Activated CD4-positive, alpha-beta T cell treated with anti-CD3 and anti-CD28 coated beads for 36 hours (primary cell): ENCODE measurements at regions of chrX and their contacts with region 1.

Region 1: GRCh38 chrX:48508400-48509244 is at the start of gene PORCN:
- DNase-seq: peak; percentile 87
- ATAC-seq: peak; percentile 92
- H3K4me3 Mint-ChIP-seq: peak within 1 kb of the TSS; percentile 85
- H3K27ac Mint-ChIP-seq: peak within 1 kb of the TSS; percentile 83
- H3K4me1 Mint-ChIP-seq: peaks cover 13% of the 10 kb centered on the region
- H3K27me3 Mint-ChIP-seq: no peaks in the 10 kb centered on the region
- total RNA-seq, gene PORCN: 6.9 to 9.0 TPM

Region 2: DNA sequence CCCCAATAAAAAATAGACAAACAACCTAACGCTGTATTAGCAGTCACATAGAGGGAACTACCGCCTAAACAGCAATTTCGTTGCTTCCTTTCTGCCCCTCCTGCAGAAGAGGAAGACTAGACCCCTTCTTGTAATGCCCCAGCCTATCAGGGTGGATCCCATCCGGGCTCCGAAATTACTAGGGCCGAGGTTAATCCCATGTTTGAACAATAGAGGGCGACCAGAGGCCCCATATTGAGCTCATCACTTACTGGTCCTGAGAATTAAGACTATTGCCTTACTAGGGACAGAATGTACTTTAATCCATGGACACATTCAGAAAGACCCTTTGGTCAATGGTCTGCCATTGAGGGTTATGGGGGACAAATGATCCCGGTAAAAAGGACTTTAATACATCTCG is 425.4 kb before region 1 on chrX:
- CTCF ChIA-PET with region 1: no interaction called
- POLR2A ChIA-PET with region 1: no interaction called
- intact Hi-C with region 1: loop called in 1 of 2 experiments (anchors 5 kb)
- DNase-seq: peak; percentile 60
- ATAC-seq: peak; percentile 68
- H3K4me3 Mint-ChIP-seq: no peak overlapping the region
- H3K27ac Mint-ChIP-seq: no peak overlapping the region
- H3K4me1 Mint-ChIP-seq: no peaks in the 10 kb centered on the region
- H3K27me3 Mint-ChIP-seq: no peaks in the 10 kb centered on the region

Region 3: DNA sequence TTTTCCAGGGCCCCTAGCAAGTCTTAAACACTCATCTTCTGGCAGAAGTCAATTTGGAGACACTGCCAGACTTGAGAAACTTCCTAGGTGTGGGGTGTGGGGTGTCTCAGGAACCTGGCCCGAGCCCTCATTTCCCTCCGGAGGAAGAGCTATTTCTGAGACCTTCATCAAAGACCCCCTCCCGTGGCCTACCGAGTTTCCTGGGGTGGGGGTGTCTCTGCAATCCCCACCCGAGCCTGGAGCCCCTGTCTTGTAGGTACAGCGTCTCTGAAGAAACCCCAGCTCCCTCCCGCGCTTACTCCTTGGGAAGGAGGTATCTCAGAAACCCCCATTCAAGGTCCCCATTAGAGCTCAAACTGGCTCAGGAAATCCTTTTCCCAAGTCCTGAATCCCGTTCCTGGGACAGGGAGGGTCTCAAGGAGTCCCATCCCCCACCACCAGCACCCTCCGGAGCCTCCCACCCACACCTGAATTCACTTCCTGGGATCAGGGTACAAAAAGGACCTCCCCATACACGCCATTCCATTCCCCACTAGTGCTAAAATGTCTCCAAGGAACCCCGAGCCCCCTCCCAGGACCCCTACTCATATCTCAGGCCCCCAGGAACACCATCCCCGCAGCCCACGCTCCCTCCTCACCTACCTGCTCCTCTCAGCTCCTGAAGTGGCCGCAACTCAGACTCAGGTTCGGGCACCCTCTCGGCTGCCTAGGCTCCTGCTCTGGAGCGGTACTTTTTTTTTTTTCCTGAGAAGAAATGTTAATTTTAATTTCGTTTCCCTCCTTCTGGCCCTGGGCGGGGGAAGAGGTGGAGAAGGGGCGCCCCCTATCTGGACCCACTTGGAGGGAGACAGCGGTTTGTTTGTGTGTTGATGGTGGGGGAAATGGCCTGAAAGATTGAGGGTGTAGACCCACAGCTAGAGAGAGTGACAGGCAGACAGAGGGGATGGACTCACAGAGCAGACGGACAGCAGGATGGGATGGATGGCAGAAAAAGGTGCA is 39.6 kb before region 1 on chrX:
- CTCF ChIA-PET with region 1: no interaction called
- POLR2A ChIA-PET with region 1: no interaction called
- intact Hi-C with region 1: loop called in 1 of 2 experiments (anchors 5 kb)
- DNase-seq: peak; percentile 61
- ATAC-seq: peak; percentile 47
- H3K4me3 Mint-ChIP-seq: peak overlapping the region; percentile 89
- H3K27ac Mint-ChIP-seq: peak overlapping the region; percentile 95
- H3K4me1 Mint-ChIP-seq: peaks cover 35% of the 10 kb centered on the region
- H3K27me3 Mint-ChIP-seq: no peaks in the 10 kb centered on the region

Region 4: DNA sequence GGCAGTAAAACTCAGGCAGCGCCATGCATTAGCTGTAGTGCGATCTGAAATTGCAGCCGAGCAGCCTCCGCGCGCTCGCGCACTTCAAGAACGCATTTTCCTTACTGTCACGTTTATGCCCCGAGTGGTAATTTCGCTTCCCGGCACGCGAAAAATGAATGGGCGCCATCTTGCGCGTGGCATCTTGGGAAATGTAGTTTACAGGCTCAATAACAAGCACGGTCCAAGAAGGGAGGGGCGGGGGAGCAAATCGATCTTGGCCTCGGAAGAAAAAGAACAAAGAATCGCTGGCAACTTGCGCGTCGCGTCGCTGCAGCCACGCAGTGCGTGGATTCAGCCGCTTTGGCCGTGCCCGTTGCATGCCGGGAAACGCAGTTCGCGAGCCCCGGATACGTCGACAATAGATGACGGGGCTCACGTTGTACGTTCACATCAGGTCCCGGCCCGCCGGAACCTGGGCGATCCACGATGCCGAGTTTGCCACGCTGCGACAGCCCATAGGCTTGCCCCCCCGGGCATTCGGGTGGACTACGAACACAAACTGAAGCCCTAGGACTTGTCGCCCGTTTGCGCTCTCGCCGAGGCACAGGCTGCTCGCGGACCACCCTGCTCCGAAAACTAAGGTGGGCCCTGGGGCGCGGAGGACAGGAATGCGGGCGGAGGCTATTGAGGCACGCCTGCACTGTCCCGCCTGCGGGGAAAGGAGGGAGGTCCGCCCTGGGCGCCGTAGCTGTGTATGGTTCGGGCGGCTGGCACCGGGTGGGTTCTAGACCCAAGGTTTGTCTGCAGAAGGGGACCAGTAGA is 32.6 kb before region 1 on chrX and contains the start of gene FTSJ1:
- CTCF ChIA-PET with region 1: no interaction called
- POLR2A ChIA-PET with region 1: interaction called, 3 read pairs
- intact Hi-C with region 1: loop called (anchors 1 to 2 kb)
- DNase-seq: peak; percentile 88
- ATAC-seq: peak; percentile 91
- H3K4me3 Mint-ChIP-seq: peak within 1 kb of the TSS; percentile 93
- H3K27ac Mint-ChIP-seq: peak within 1 kb of the TSS; percentile 90
- H3K4me1 Mint-ChIP-seq: peaks cover 36% of the 10 kb centered on the region
- H3K27me3 Mint-ChIP-seq: no peaks in the 10 kb centered on the region
- total RNA-seq, gene FTSJ1: 73.0 to 93.7 TPM

Region 5: DNA sequence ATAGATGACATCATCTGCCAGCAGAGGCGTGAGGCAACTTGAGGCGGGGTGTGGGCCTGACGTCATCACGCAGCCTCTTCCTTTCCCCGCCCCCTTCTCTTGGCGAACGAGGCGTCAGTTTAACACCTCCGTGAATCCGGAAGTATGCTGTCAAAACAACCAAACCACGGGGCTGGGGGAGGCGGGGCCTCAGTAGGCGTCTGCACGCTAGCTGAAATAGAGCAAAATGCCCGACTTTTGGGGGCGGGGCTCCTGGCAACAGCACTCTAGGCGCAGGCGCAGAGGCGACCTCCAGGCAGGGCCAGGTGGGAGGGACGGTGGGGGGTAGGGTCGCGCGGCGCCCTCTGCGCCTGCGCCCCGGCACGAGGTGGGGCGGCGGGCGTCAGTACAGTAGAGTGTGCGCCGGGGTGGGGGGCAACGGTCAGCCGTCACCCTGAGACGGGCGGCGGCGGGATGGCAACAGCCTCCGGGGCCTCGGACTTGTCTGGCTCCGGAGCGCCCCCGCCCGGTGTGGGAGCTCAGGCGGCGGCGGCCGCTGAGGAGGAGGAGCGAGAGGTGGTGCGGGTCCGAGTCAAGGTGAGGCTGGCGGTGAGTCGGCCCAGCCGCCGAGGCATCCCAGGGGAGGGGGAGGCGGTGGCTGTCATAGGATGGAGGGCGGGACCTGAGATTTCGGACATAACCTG is 30.9 kb after region 1 on chrX and contains the start of gene TBC1D25:
- CTCF ChIA-PET with region 1: no interaction called
- POLR2A ChIA-PET with region 1: no interaction called
- intact Hi-C with region 1: loop called in 1 of 2 experiments (anchors 1 kb)
- DNase-seq: peak; percentile 98
- ATAC-seq: peak; percentile 80
- H3K4me3 Mint-ChIP-seq: peak within 1 kb of the TSS; percentile 87
- H3K27ac Mint-ChIP-seq: peak within 1 kb of the TSS; percentile 89
- H3K4me1 Mint-ChIP-seq: peaks cover 15% of the 10 kb centered on the region
- H3K27me3 Mint-ChIP-seq: no peaks in the 10 kb centered on the region
- total RNA-seq, gene TBC1D25: 13.2 to 15.2 TPM

Region 6: GRCh38 chrX:49100704-49101628 is 592.3 kb after region 1 on chrX:
- CTCF ChIA-PET with region 1: no interaction called
- POLR2A ChIA-PET with region 1: no interaction called
- intact Hi-C with region 1: no loop called
- DNase-seq: peak; percentile 92
- ATAC-seq: peak; percentile 97
- H3K4me3 Mint-ChIP-seq: peak overlapping the region; percentile 85
- H3K27ac Mint-ChIP-seq: peak overlapping the region; percentile 89
- H3K4me1 Mint-ChIP-seq: peaks cover 7% of the 10 kb centered on the region
- H3K27me3 Mint-ChIP-seq: no peaks in the 10 kb centered on the region